Vagina (tissue), 2 donors: ENCODE measurements at regions of chr10 and their contacts with region 1.

Region 1: DNA sequence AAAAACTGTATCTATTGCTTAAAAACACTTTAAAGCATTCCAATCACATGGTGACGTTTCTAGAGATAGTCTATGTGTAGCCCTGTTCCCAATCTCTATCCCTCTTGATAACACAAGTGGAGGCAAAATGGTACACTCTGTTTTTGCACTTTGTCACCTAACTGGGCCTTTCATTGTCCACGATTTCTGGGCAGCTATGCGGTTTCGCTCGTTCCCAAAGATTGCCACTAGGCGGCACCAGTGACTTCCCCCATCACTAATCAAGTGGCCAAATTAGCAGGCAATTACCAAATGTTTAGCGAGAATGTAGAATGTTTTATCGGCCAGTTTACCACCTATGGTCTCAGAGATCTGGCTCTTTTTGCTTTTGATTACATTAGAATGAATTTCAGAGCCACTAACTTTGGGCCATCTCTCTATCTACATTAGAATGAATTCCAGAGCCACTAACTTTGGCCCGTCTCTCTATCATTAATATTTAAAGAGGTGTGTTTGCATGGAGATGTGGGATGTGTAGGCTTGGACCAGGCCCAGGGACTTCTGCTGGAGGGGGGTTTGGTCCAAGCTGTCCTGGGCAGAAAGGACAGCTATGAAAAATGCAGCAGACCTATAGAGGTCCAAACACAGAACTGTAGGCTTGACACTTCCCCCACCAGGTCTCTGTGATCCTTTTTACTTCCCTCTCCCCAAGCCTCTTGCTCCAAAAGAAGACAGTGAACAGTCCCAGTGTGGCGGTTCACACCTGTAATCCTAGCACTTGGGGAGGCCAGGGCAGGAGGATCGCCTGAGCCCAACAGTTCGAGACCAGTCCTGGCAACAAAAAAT is 90.1 kb downstream of the EPC1 start:
- DNase-seq: no peak
- H3K4me3 ChIP-seq: no peak overlapping the region
- H3K27ac ChIP-seq: no peak overlapping the region
- H3K4me1 ChIP-seq: no peaks in the 10 kb centered on the region
- H3K27me3 ChIP-seq: no peaks in the 10 kb centered on the region
- CTCF ChIP-seq: peak; percentile 44 to 83 (median 66)
- POLR2A ChIP-seq: no peak

Region 2: GRCh38 chr10:31836569-31837406 is 420.0 kb before region 1 on chr10:
- intact Hi-C with region 1: no loop called
- DNase-seq: no peak
- H3K4me3 ChIP-seq: no peak overlapping the region
- H3K27ac ChIP-seq: no peak overlapping the region
- H3K4me1 ChIP-seq: no peaks in the 10 kb centered on the region
- H3K27me3 ChIP-seq: no peaks in the 10 kb centered on the region
- CTCF ChIP-seq: peak in 1 of 3 experiments; percentile 13
- POLR2A ChIP-seq: no peak

Region 3: DNA sequence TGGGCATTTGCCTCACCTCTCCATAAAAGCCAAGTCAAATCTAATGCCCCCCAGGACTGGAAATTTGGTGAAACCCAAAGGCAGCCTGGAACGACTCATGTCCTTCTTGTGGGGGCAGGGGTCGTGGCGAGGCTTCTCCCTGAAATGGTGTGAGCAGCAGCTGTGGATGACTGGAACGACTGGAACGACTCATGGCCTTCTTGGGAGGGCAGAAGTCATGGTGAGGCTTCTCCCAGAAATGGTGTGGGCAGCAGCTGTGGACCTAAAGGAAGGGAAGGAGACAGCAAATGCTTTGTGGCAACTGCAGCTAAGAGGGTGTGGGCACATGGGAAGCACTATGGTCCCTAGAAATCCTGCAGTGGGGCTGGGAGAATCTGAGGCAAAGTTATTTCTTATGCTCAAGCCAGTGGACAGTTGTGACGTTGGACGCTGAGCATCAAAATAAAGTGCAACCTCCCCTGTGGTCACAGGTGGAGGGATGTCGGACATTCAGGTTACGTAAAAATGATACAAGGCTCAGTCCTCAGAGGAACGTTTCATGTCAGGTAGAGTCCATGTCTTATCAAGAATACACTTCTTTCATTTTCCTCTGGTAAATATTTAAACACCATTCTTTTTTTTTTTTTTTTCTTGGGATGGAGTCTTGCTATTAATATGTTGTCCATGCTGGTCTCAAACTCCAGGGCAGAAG is 93.6 kb before region 1 on chr10:
- intact Hi-C with region 1: no loop called
- DNase-seq: no peak
- H3K4me3 ChIP-seq: no peak overlapping the region
- H3K27ac ChIP-seq: no peak overlapping the region
- H3K4me1 ChIP-seq: no peaks in the 10 kb centered on the region
- H3K27me3 ChIP-seq: no peaks in the 10 kb centered on the region
- CTCF ChIP-seq: no peak
- POLR2A ChIP-seq: no peak

Region 4: DNA sequence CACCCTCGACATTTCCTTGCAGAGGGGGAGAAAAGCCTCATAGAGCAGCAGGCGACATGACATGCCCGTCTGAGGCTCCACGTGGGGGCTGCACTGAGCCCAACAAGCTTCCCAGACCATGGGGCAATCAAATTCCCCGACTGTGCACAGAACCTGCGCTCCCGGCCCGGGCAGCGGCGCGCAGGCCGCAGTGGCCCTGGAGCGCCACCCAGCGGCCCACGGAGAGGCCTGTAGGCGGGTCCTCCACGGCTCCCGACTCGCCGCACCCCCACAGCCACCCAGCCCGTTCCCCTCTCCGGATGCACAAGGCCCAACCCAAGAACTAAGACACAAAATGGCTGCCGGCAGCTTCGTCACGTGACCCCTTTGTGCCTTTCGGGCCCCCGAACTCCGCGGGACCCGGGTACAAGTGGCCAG is 89.3 kb after region 1 on chr10:
- intact Hi-C with region 1: loop called (anchors 10 kb)
- DNase-seq: peak in 1 of 2 donors; percentile 96
- H3K4me3 ChIP-seq: peak overlapping the region; percentile 89 to 99
- H3K27ac ChIP-seq: peak overlapping the region; percentile 100
- H3K4me1 ChIP-seq: peaks cover 74% of the 10 kb centered on the region
- H3K27me3 ChIP-seq: no peaks in the 10 kb centered on the region
- CTCF ChIP-seq: peak; percentile 50 to 92 (median 87)
- POLR2A ChIP-seq: no peak

Region 5: GRCh38 chr10:32426186-32426585 is 169.4 kb after region 1 on chr10:
- intact Hi-C with region 1: no loop called
- DNase-seq: no peak
- H3K4me3 ChIP-seq: no peak overlapping the region
- H3K27ac ChIP-seq: no peak overlapping the region
- H3K4me1 ChIP-seq: no peaks in the 10 kb centered on the region
- H3K27me3 ChIP-seq: no peaks in the 10 kb centered on the region
- CTCF ChIP-seq: no peak
- POLR2A ChIP-seq: no peak